Posterior cingulate gyrus (tissue), 11 donors: ENCODE measurements at regions of chr10 and their contacts with region 1.

Region 1: DNA sequence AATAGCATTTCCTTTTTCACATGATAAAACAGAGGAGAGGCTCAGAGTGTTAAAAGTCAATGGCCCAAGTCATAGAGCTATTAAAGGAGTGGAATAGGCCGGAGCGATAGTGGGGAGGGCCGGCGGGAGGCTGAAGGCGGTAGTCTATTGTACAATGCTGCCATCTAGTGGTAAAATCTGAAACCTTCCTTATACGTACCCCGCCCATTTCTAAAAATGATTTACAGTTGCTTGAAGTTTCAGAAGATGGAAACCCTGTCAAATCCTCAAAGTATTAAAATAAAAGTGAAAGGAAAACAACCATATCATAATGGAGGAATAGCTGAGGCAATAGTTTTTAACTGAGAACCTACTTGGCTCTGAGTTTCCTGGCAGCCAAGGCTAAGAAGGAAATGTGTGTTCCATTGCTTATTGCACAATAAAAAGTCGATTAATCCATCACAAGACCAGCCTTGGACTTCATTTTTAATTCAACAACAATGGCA is 209.1 kb downstream of the CCSER2 start:
- DNase-seq: peak in 5 of 10 donors; percentile 28 to 90 (median 83)

Region 2: GRCh38 chr10:84264611-84265141 is 272.8 kb before region 1 on chr10:
- intact Hi-C with region 1: loop called (anchors 1 kb)
- DNase-seq: peak; percentile 50 to 97 (median 82)

Region 3: GRCh38 chr10:84352251-84352842 is 185.1 kb before region 1 on chr10:
- intact Hi-C with region 1: loop called (anchors 1 kb)
- DNase-seq: peak in 8 of 10 donors; percentile 35 to 89 (median 58)

Region 4: DNA sequence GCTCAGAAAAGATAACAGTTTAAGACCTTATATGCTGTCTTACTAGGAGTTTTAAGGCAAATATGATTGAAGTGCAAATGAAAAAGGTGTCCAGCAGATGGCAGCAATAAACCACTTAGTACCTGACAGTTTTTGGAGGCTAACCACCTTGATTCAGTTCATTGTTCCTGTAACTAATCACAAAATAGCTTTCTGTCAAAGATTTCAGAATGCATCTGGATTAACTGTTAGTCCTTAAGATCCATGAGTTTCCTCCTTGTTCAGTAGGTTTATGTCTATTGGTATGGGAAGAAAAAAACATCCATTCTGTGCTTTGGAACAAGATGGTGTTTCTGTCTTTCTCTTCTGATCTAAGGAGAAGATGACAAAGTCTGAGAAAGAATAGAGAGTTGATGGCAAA is 162.5 kb before region 1 on chr10:
- intact Hi-C with region 1: loop called (anchors 1 kb)
- DNase-seq: peak in 1 of 10 donors; percentile 32

Region 5: DNA sequence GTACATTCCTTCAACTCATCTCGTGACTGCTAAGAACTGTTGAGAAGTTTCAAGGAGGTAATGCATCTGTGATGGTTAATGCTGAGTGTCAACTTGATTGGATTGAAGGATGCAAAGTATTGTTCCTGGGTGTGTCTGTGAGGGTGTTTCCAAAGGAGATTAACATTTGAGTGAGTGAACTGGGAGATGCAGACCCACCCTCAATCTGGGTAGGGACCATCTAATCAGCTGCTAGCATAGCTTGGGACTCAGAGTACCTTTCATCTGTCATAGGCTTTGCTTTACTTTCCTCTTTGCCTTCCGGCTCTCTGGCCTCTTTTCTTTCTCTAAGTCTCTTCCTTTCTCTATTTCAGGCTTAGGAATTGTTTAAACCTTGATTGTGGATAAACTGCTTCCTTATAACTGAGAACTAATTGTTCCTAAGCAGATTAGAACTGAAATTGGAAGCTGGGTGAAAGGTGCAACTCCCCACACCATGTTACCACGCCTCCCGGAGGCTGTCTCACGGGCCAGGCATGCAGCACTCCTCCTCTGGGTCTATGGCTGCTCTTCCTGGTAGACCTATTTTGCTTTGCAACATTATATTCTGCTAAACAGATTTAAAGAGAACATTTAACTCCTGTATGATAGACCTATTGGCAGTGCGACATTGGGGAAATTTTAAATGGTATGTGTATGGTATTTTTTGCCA is 89.1 kb after region 1 on chr10:
- intact Hi-C with region 1: no loop called
- DNase-seq: no peak

Region 6: GRCh38 chr10:84715911-84716310 is 178.4 kb after region 1 on chr10:
- intact Hi-C with region 1: loop called (anchors 10 kb)
- DNase-seq: peak in 1 of 10 donors; percentile 22

Region 7: GRCh38 chr10:84850826-84851225 is 313.3 kb after region 1 on chr10:
- intact Hi-C with region 1: no loop called
- DNase-seq: no peak